CD4-positive, alpha-beta memory T cell (primary cell): ENCODE measurements at regions of chr22 and their contacts with region 1.

Region 1: GRCh38 chr22:17213976-17214375 is 5.3 kb downstream of the ADA2 start:
- DNase-seq: peak in 4 of 5 donors; percentile 29 to 48 (median 38)
- H3K4me3 ChIP-seq: no peak overlapping the region
- H3K4me3 Mint-ChIP-seq: peak overlapping the region in 2 of 8 donors; percentile 13 to 54
- H3K27ac ChIP-seq: no peak overlapping the region
- H3K27ac Mint-ChIP-seq: peak overlapping the region in 2 of 7 donors; percentile 25 to 42
- H3K4me1 ChIP-seq: peaks cover 37% of the 10 kb centered on the region
- H3K4me1 Mint-ChIP-seq: peaks cover 29 to 64% (median 46%) of the 10 kb centered on the region in 4 donors
- H3K27me3 ChIP-seq: no peaks in the 10 kb centered on the region
- H3K27me3 Mint-ChIP-seq: no peaks in the 10 kb centered on the region

Region 2: DNA sequence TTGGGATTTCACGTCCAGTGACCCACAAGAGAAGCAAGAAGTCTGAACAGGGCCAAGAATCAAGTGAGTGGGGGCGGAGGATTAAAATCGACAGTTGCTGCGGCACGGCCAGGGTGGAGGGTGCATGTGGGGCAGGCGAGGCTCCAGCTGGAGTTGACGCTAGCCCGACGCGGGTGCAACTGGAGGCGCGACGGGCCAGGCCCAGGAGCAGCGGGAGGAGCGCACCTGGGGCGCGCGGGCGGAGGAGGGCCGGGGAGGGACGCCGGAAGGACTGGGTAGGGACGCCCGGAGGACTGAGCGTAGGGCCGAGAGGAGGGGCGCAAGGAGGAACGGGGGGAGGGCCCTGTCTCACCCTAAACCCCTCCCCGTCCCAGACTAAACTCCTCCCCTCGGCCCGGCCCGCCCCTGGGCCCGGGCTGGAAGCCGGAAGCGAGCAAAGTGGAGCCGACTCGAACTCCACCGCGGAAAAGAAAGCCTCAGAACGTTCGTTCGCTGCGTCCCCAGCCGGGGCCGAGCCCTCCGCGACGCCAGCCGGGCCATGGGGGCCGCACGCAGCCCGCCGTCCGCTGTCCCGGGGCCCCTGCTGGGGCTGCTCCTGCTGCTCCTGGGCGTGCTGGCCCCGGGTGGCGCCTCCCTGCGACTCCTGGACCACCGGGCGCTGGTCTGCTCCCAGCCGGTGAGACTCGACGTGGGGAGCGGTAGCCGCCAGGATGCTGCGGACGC is 129.3 kb before region 1 on chr22 and contains the start of gene IL17RA:
- CTCF ChIA-PET with region 1: no interaction called
- POLR2A ChIA-PET with region 1: interaction called, 3 read pairs
- intact Hi-C with region 1: loop called (anchors 1 kb)
- DNase-seq: peak; percentile 92 to 97 (median 94)
- H3K4me3 ChIP-seq: peak within 1 kb of the TSS; percentile 58 to 86
- H3K4me3 Mint-ChIP-seq: peak within 1 kb of the TSS; percentile 88 to 99 (median 96)
- H3K27ac ChIP-seq: peak within 1 kb of the TSS; percentile 86
- H3K27ac Mint-ChIP-seq: peak within 1 kb of the TSS; percentile 93 to 97 (median 95)
- H3K4me1 ChIP-seq: peaks cover 47% of the 10 kb centered on the region
- H3K4me1 Mint-ChIP-seq: peaks cover 29 to 50% (median 41%) of the 10 kb centered on the region in 4 donors
- H3K27me3 ChIP-seq: no peaks in the 10 kb centered on the region
- H3K27me3 Mint-ChIP-seq: no peaks in the 10 kb centered on the region
- total RNA-seq, gene IL17RA: 71.6 to 77.2 TPM

Region 3: GRCh38 chr22:17158568-17159503 is 55.1 kb before region 1 on chr22 and contains the start of gene HDHD5:
- CTCF ChIA-PET with region 1: no interaction called
- POLR2A ChIA-PET with region 1: interaction called, 4 read pairs
- intact Hi-C with region 1: loop called (anchors 5 kb)
- DNase-seq: peak; percentile 81 to 87 (median 85)
- H3K4me3 ChIP-seq: peak within 1 kb of the TSS; percentile 52 to 81
- H3K4me3 Mint-ChIP-seq: peak within 1 kb of the TSS; percentile 84 to 90 (median 88)
- H3K27ac ChIP-seq: peak within 1 kb of the TSS; percentile 46
- H3K27ac Mint-ChIP-seq: peak within 1 kb of the TSS; percentile 77 to 88 (median 85)
- H3K4me1 ChIP-seq: peaks cover 36% of the 10 kb centered on the region
- H3K4me1 Mint-ChIP-seq: peaks cover 17 to 48% (median 24%) of the 10 kb centered on the region in 4 donors
- H3K27me3 ChIP-seq: no peaks in the 10 kb centered on the region
- H3K27me3 Mint-ChIP-seq: no peaks in the 10 kb centered on the region
- total RNA-seq, gene HDHD5: 23.1 to 23.3 TPM

Region 4: GRCh38 chr22:17190702-17191101 is 23.3 kb before region 1 on chr22:
- CTCF ChIA-PET with region 1: no interaction called
- POLR2A ChIA-PET with region 1: no interaction called
- intact Hi-C with region 1: no loop called
- DNase-seq: no peak
- H3K4me3 ChIP-seq: no peak overlapping the region
- H3K4me3 Mint-ChIP-seq: no peak overlapping the region
- H3K27ac ChIP-seq: no peak overlapping the region
- H3K27ac Mint-ChIP-seq: peak overlapping the region in 3 of 7 donors; percentile 31 to 60 (median 59)
- H3K4me1 ChIP-seq: no peaks in the 10 kb centered on the region
- H3K4me1 Mint-ChIP-seq: peaks cover 0 to 4% (median 0%) of the 10 kb centered on the region in 4 donors
- H3K27me3 ChIP-seq: no peaks in the 10 kb centered on the region
- H3K27me3 Mint-ChIP-seq: no peaks in the 10 kb centered on the region

Region 5: GRCh38 chr22:17258015-17258787 is 44.2 kb after region 1 on chr22:
- CTCF ChIA-PET with region 1: no interaction called
- POLR2A ChIA-PET with region 1: interaction called, 27 read pairs
- intact Hi-C with region 1: loop called (anchors 1 kb)
- DNase-seq: peak; percentile 25 to 58 (median 43)
- H3K4me3 ChIP-seq: no peak overlapping the region
- H3K4me3 Mint-ChIP-seq: peak overlapping the region; percentile 50 to 75 (median 63)
- H3K27ac ChIP-seq: no peak overlapping the region
- H3K27ac Mint-ChIP-seq: peak overlapping the region; percentile 77 to 91 (median 82)
- H3K4me1 ChIP-seq: peaks cover 22% of the 10 kb centered on the region
- H3K4me1 Mint-ChIP-seq: peaks cover 15 to 23% (median 20%) of the 10 kb centered on the region in 4 donors
- H3K27me3 ChIP-seq: no peaks in the 10 kb centered on the region
- H3K27me3 Mint-ChIP-seq: no peaks in the 10 kb centered on the region

Region 6: DNA sequence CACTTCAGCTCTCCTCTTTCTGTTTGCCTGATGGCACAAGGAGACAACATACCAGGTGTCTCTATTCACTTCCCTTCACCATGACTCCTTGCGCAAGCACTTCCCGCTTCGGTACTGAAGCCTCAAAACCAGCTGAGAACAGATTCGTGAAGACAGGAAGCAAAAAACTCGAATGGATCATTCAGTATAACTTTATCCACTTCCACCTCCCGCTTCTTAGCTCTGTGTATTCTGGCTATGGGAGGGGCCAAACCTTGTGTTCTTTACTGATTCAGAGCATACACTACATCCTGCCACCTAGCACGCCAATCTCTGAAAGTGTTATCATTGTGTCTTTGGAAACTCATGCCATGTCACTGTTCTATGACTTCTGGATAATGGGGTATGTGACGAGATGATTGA is 67.5 kb after region 1 on chr22:
- CTCF ChIA-PET with region 1: no interaction called
- POLR2A ChIA-PET with region 1: interaction called, 4 read pairs
- intact Hi-C with region 1: loop called (anchors 5 kb)
- DNase-seq: peak; percentile 15 to 42 (median 25)
- H3K4me3 ChIP-seq: no peak overlapping the region
- H3K4me3 Mint-ChIP-seq: peak overlapping the region in 7 of 8 donors; percentile 34 to 78 (median 61)
- H3K27ac ChIP-seq: no peak overlapping the region
- H3K27ac Mint-ChIP-seq: peak overlapping the region; percentile 2 to 87 (median 65)
- H3K4me1 ChIP-seq: peaks cover 18% of the 10 kb centered on the region
- H3K4me1 Mint-ChIP-seq: peaks cover 10 to 22% (median 14%) of the 10 kb centered on the region in 4 donors
- H3K27me3 ChIP-seq: no peaks in the 10 kb centered on the region
- H3K27me3 Mint-ChIP-seq: no peaks in the 10 kb centered on the region